Activated CD8-positive, alpha-beta T cell treated with anti-CD3 and anti-CD28 coated beads, Interleukin-2, amount 10 ng/mL, durations not matched to agents 7 days and 5 days (primary cell): ENCODE measurements at regions of chr1 and their contacts with region 1.

Region 1: DNA sequence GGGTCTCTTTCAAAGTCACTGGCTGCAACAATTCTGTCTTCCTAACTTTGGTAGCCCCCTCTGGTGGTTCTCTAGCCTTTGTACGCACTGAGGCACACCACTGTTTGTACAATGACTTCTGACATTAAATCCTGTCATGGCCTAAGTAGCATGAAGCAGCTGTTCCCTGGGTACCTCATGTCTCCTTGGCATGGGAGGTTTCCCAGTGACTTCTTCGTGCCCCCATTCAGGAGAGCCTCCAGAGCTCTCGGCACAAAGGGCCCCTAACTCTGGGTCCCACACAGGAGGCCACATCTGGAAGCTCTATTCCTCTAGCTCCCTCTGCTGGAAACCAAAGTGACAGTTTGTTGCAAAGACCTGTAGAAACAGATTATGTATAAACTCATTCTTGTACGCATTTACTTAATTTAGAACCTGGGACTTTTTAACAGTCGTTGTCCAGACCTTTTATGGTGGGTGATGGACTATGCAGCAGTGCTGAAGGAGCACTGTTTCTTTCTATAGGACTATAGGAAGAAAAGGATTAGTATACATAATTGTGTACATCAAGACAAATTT is 13.4 kb downstream of the SWT1 start:
- DNase-seq: peak; percentile 65
- ATAC-seq: peak; percentile 93
- H3K4me3 Mint-ChIP-seq: peak overlapping the region; percentile 13
- H3K27ac Mint-ChIP-seq: no peak overlapping the region
- H3K4me1 Mint-ChIP-seq: peaks cover 13% of the 10 kb centered on the region
- H3K27me3 Mint-ChIP-seq: no peaks in the 10 kb centered on the region

Region 2: GRCh38 chr1:184805667-184806295 is 364.6 kb before region 1 on chr1:
- CTCF ChIA-PET with region 1: interaction called, 19 read pairs
- POLR2A ChIA-PET with region 1: no interaction called
- DNase-seq: peak; percentile 88
- ATAC-seq: peak; percentile 95
- H3K4me3 Mint-ChIP-seq: no peak overlapping the region
- H3K27ac Mint-ChIP-seq: peak overlapping the region; percentile 32
- H3K4me1 Mint-ChIP-seq: peaks cover 3% of the 10 kb centered on the region
- H3K27me3 Mint-ChIP-seq: no peaks in the 10 kb centered on the region

Region 3: DNA sequence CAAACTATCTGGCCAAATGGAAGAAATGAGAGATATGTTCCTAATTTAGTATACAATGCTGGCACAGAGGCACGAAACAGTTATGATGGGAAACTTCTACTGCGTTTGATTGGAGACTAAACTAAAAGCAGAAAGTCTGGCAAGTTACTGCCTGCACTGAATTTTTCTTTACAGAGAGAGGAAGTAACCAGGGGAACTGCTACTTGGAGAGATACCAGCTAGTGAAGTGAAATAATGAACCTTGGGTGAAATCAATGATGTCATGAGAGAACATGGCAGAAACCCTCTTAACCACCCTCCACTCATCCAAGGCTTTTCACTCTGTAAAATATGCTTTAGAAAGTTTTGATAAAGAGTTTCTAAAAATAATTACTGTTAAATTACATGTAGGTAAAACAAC is 225.3 kb before region 1 on chr1:
- CTCF ChIA-PET with region 1: no interaction called
- POLR2A ChIA-PET with region 1: no interaction called
- DNase-seq: no peak
- ATAC-seq: no peak
- H3K4me3 Mint-ChIP-seq: no peak overlapping the region
- H3K27ac Mint-ChIP-seq: no peak overlapping the region
- H3K4me1 Mint-ChIP-seq: peaks cover 7% of the 10 kb centered on the region
- H3K27me3 Mint-ChIP-seq: no peaks in the 10 kb centered on the region

Region 4: DNA sequence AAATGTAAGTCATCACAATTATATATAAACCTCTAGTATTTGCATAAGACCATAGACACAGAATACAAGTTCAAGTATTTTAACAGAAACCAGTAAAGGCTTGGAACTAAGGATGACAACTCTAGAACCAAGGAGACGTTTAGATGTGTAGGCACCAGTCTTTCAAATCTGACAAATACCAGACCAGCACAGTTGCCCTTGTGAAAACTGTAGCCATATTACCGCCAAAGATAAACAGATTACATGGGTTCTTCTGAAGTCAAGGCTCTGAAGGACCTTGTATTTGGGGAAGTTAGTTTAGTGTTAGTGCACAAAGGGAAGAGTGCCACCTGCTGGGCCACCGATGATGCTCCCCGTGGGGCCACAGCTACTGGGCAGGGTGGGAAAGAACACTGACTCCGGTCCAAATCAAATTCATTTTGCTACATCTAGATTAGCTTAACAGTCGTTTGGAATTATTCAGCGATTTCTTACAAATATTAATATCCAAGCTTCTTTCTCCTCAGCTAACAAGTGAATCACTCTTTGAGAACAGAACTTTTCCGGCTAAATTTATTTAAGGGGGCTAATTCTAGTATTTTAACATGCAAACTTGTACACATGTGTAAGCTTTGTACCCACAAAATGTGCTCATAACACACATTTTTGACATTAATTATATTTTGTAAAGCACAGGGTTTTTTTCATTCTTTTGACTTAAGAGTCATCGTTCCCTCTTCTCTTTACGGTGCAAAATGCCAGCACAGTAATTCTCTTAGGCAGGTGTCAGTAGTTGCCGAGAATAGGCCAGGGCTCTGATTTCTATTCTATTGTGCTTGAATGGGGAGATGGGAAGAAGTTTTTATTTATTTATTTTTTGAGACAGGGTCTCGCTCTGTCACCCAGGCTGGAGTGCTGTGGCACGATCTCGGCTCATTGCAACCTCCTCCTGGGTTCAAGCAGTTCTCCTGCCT is 188.1 kb before region 1 on chr1:
- CTCF ChIA-PET with region 1: interaction called, 28 read pairs
- POLR2A ChIA-PET with region 1: no interaction called
- DNase-seq: peak; percentile 83
- ATAC-seq: peak; percentile 99
- H3K4me3 Mint-ChIP-seq: no peak overlapping the region
- H3K27ac Mint-ChIP-seq: no peak overlapping the region
- H3K4me1 Mint-ChIP-seq: peaks cover 7% of the 10 kb centered on the region
- H3K27me3 Mint-ChIP-seq: peaks cover 28% of the 10 kb centered on the region

Region 5: DNA sequence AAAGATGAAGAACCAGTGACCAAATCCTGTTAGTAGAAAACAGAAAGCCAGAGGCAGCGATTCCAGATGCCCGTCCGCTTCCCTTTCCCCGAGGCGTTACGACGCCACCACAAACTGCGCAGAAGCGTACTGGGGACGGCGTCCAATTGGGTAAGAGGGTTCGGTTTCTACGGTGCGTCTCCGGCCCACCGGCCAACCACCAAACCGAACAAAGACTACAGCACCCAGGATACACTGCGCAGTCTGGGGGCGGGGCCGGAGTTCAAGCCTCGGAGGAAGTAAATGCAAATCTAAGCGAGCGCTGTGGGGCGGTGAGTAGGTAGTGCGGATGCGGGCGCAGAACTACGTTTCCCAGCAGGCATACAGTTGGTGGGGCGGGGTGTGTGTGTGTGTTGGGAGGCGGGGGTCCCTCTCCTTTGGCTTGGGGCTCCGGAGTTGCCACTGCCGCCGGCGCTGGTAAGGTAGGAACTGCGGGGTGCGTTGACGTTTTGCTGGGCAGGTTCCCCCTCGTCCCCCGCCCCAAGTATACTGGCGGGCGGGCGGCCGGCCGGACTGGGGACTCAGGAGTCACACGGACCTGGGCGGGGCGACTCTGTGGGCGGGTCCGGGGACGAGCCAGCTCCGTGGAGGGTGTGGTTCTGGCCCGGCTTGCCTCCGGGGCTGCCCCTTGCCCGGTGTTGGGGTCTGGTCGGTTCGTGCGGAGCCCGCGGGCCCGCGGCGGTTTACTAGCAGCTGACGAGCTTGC is 13.3 kb before region 1 on chr1 and contains the starts of genes SWT1 and TRMT1L:
- CTCF ChIA-PET with region 1: interaction called, 136 read pairs
- POLR2A ChIA-PET with region 1: interaction called, 4 read pairs
- DNase-seq: peak; percentile 99
- ATAC-seq: peak; percentile 95
- H3K4me3 Mint-ChIP-seq: peak within 1 kb of the TSS; percentile 99
- H3K27ac Mint-ChIP-seq: peak within 1 kb of the TSS; percentile 98
- H3K4me1 Mint-ChIP-seq: peaks cover 56% of the 10 kb centered on the region
- H3K27me3 Mint-ChIP-seq: no peaks in the 10 kb centered on the region
- total RNA-seq, gene SWT1: 2.1 to 2.2 TPM
- total RNA-seq, gene TRMT1L: 20.5 to 21.4 TPM

Region 6: DNA sequence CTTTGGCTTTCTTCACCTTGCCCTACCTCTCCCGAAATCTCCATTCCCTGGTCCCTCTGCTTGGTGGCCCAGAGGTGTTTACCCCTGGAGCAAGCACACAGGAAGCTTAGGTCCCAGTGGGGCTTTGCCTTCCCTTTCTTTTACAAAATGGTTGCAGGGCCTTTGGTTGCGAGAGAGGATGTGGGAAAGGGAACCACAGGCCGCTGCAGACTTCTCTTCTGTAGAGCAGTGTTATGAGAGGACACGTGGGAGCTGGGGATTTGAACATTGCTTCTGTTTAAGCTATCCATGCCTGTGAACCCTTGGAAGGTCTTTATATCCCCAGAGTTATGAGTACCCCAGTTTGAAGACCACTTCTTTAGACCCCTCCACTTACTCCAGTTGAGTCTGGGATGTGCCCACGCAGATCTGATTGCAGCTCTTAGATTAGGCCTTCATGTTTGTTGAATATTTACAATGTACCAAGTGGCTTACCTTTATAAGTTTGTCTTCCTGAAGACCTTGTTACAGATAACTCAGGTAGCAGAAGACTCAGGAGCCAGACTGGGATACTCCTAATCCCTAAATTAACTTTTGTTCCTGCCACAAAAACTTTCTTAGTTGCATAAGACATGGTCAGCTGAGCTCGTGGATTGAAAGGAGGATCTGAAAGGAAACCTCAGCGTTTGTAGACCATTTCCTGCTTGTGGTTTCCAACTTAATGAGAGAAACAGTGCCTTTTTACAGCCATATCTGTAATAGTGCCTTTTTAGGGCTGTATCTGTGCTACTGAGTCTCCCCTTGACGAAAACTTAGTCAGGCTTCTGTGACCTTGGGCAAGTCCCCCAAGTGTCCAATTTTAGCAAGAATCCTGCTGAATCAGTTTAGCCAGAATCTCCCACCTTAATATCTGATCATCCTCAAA is 168.6 kb after region 1 on chr1:
- CTCF ChIA-PET with region 1: no interaction called
- POLR2A ChIA-PET with region 1: no interaction called
- DNase-seq: peak; percentile 90
- ATAC-seq: peak; percentile 94
- H3K4me3 Mint-ChIP-seq: peak overlapping the region; percentile 57
- H3K27ac Mint-ChIP-seq: peak overlapping the region; percentile 92
- H3K4me1 Mint-ChIP-seq: peaks cover 64% of the 10 kb centered on the region
- H3K27me3 Mint-ChIP-seq: no peaks in the 10 kb centered on the region

Region 7: GRCh38 chr1:185681034-185681633 is 510.8 kb after region 1 on chr1:
- CTCF ChIA-PET with region 1: interaction called, 44 read pairs
- POLR2A ChIA-PET with region 1: no interaction called
- DNase-seq: peak; percentile 54
- ATAC-seq: peak; percentile 67
- H3K4me3 Mint-ChIP-seq: no peak overlapping the region
- H3K27ac Mint-ChIP-seq: no peak overlapping the region
- H3K4me1 Mint-ChIP-seq: peaks cover 28% of the 10 kb centered on the region
- H3K27me3 Mint-ChIP-seq: peaks cover 6% of the 10 kb centered on the region